IMR-90 (cell line): ENCODE measurements at regions of chr11 and their contacts with region 1.

Region 1: GRCh38 chr11:67373925-67374618 is 674 bp upstream of the CLCF1 start:
- DNase-seq: peak; percentile 96
- ATAC-seq: peak; percentile 31
- H3K4me3 ChIP-seq: peak overlapping the region; percentile 78
- H3K27ac ChIP-seq: peak overlapping the region; percentile 94
- H3K4me1 ChIP-seq: peaks cover 43% of the 10 kb centered on the region
- H3K27me3 ChIP-seq: no peaks in the 10 kb centered on the region
- CTCF ChIP-seq: peak; percentile 44
- POLR2A ChIP-seq: peak; percentile 70
- RAD21 ChIP-seq: peak; percentile 30; the same call in 1 of the 2 replicates

Region 2: GRCh38 chr11:67006139-67006884 is 367.8 kb before region 1 on chr11:
- CTCF ChIA-PET with region 1: no interaction called
- POLR2A ChIA-PET with region 1: no interaction called
- dilution Hi-C with region 1: no loop called
- in situ Hi-C with region 1: no loop called
- intact Hi-C with region 1: no loop called
- DNase-seq: no peak
- ATAC-seq: no peak
- H3K4me3 ChIP-seq: no peak overlapping the region
- H3K27ac ChIP-seq: no peak overlapping the region
- H3K4me1 ChIP-seq: no peaks in the 10 kb centered on the region
- H3K27me3 ChIP-seq: no peaks in the 10 kb centered on the region; the same call in 1 of the 2 replicates
- CTCF ChIP-seq: no peak
- POLR2A ChIP-seq: no peak
- RAD21 ChIP-seq: no peak

Region 3: GRCh38 chr11:67317205-67317887 is 56.7 kb before region 1 on chr11:
- CTCF ChIA-PET with region 1: no interaction called
- POLR2A ChIA-PET with region 1: interaction called, 11 read pairs
- dilution Hi-C with region 1: no loop called
- in situ Hi-C with region 1: no loop called
- intact Hi-C with region 1: no loop called
- DNase-seq: peak; percentile 89
- ATAC-seq: peak; percentile 89
- H3K4me3 ChIP-seq: peak overlapping the region; percentile 67
- H3K27ac ChIP-seq: peak overlapping the region; percentile 42
- H3K4me1 ChIP-seq: 0 out of 2 replicates have a peak, but pooled peaks cover 2% of the 10 kb centered on the region
- H3K27me3 ChIP-seq: no peaks in the 10 kb centered on the region
- CTCF ChIP-seq: peak; percentile 99
- POLR2A ChIP-seq: peak; percentile 62; the same call in 1 of the 2 replicates
- RAD21 ChIP-seq: peak; percentile 96

Region 4: GRCh38 chr11:67353317-67354074 is 20.6 kb before region 1 on chr11 and contains the start of gene POLD4:
- CTCF ChIA-PET with region 1: interaction called, 128 read pairs
- POLR2A ChIA-PET with region 1: interaction called, 11 read pairs
- dilution Hi-C with region 1: no loop called
- in situ Hi-C with region 1: no loop called
- intact Hi-C with region 1: loop called (anchors 2 kb)
- DNase-seq: peak; percentile 92
- ATAC-seq: peak; percentile 83
- H3K4me3 ChIP-seq: peak within 1 kb of the TSS; percentile 53
- H3K27ac ChIP-seq: peak within 1 kb of the TSS; percentile 91
- H3K4me1 ChIP-seq: peaks cover 42% of the 10 kb centered on the region
- H3K27me3 ChIP-seq: no peaks in the 10 kb centered on the region
- CTCF ChIP-seq: no peak
- POLR2A ChIP-seq: peak; percentile 91
- RAD21 ChIP-seq: no peak
- total RNA-seq, gene POLD4: 40.8 and 46.4 TPM in 2 replicates

Region 5: GRCh38 chr11:67468835-67469811 is 95.1 kb after region 1 on chr11 and contains the start of gene TMEM134:
- CTCF ChIA-PET with region 1: no interaction called
- POLR2A ChIA-PET with region 1: interaction called, 11 read pairs
- dilution Hi-C with region 1: no loop called
- in situ Hi-C with region 1: no loop called
- intact Hi-C with region 1: no loop called
- DNase-seq: peak; percentile 87
- ATAC-seq: peak; percentile 96
- H3K4me3 ChIP-seq: peak within 1 kb of the TSS; percentile 87
- H3K27ac ChIP-seq: peak within 1 kb of the TSS; percentile 78
- H3K4me1 ChIP-seq: peaks cover 7% of the 10 kb centered on the region
- H3K27me3 ChIP-seq: peaks cover 3% of the 10 kb centered on the region; the same call in 1 of the 2 replicates
- CTCF ChIP-seq: peak; percentile 56
- POLR2A ChIP-seq: peak; percentile 79
- RAD21 ChIP-seq: peak; percentile 54
- total RNA-seq, gene TMEM134: 12.5 and 18.9 TPM in 2 replicates